ENCODE measurements at regions of chr15 and their contacts with region 1.

Region 1: GRCh38 chr15:68775671-68776476 is 44.8 kb downstream of the ANP32A start:
- DNase-seq: peak; percentile 55 to 93 (median 87)
- H3K4me3 ChIP-seq: no peak overlapping the region
- H3K27ac ChIP-seq: peak overlapping the region in 1 of 2 donors; percentile 57
- H3K4me1 ChIP-seq: peaks cover 13% of the 10 kb centered on the region
- H3K27me3 ChIP-seq: no peaks in the 10 kb centered on the region
- CTCF ChIP-seq: no peak
- EP300 ChIP-seq: no peak
- POLR2A ChIP-seq: no peak

Region 2: DNA sequence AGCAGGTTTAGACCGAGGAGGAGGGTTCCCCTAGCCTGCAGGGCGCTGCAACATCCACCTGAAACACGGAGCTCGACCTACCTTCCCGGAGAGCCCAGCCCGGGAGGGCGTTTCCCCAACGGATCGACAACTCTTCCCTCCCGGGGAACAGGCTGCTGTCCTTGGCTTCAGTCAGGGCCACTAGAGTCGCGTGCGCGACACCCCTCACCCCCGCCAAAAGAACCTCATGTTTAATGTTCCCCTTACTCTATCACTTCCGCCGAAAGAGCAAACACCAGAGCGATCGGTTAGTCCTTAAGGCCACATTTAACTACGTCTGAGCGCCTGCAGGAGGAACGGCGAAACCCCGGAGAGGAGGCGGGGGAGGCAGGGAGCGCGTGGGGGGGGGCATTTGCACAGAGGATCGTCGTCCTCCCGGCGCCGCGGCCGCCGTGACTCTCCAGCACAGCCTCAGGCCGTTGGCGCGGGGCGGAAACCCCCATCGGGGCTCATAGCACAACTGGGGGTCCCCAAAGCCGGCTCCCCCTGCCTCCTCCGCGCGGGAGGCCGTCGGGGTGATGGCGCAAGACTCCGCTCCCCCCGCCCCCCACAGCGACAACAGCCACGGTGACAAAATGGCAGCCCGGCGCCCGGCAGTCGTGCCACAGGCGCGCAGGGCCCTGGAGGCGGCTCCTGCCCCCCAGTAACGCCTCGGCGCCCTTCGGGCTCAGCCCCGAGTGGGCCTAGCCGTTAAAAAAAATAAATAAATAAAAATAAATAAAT is 41.6 kb after region 1 on chr15:
- intact Hi-C with region 1: loop called in 1 of 4 experiments (anchors 2 kb)
- DNase-seq: peak; percentile 53 to 74 (median 68)
- H3K4me3 ChIP-seq: peak overlapping the region; percentile 89
- H3K27ac ChIP-seq: peak overlapping the region; percentile 95 to 98
- H3K4me1 ChIP-seq: peaks cover 6% of the 10 kb centered on the region
- H3K27me3 ChIP-seq: no peaks in the 10 kb centered on the region
- CTCF ChIP-seq: no peak
- EP300 ChIP-seq: no peak
- POLR2A ChIP-seq: no peak

Region 3: GRCh38 chr15:68875377-68876116 is 99.7 kb after region 1 on chr15:
- intact Hi-C with region 1: no loop called
- DNase-seq: peak; percentile 87 to 95 (median 94)
- H3K4me3 ChIP-seq: peak overlapping the region; percentile 31
- H3K27ac ChIP-seq: no peak overlapping the region
- H3K4me1 ChIP-seq: no peaks in the 10 kb centered on the region
- H3K27me3 ChIP-seq: no peaks in the 10 kb centered on the region
- CTCF ChIP-seq: peak; percentile 72 to 92 (median 90)
- EP300 ChIP-seq: no peak
- POLR2A ChIP-seq: no peak

Region 4: DNA sequence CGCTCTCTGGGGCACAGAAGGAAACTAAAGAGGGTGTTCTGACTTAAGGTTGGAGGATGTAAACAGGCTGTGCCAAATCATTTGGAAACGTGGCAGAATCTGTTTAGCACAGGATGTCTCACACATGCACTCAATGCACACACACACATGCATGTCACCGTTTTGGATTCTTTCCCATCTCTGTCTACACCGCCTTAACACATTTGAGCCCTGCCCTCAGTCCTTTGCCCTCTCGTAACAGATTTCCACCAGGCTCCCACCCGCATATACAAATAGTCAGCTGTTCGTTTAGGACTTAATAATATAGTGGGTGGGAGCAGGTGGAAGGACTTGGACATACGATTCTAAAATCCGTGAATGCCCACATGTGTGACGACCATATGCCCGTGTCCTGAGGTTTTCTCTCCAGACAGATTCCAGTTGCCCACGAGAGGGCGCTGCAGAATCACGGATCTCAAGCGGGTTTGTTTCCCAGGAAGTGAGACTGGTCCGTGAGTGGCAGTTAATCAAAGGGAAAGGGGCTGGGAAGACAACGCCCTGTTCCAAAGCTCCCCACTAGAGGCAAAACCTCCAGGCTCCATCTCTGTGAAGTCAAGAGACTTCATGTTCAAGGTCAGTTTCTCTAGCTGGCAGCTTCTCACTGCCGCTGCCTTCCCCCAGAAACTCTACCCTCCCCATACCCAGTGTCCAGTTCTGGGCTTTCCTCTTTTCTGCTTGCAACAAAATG is 283.1 kb after region 1 on chr15:
- intact Hi-C with region 1: no loop called
- DNase-seq: peak; percentile 86 to 94 (median 90)
- H3K4me3 ChIP-seq: no peak overlapping the region
- H3K27ac ChIP-seq: no peak overlapping the region
- H3K4me1 ChIP-seq: peaks cover 7% of the 10 kb centered on the region
- H3K27me3 ChIP-seq: no peaks in the 10 kb centered on the region
- CTCF ChIP-seq: peak; percentile 63 to 86 (median 77)
- EP300 ChIP-seq: no peak
- POLR2A ChIP-seq: no peak

Measured in ovary (tissue), 10 donors.